ENCODE measurements at regions of chr12 and their contacts with region 1.

Region 1: DNA sequence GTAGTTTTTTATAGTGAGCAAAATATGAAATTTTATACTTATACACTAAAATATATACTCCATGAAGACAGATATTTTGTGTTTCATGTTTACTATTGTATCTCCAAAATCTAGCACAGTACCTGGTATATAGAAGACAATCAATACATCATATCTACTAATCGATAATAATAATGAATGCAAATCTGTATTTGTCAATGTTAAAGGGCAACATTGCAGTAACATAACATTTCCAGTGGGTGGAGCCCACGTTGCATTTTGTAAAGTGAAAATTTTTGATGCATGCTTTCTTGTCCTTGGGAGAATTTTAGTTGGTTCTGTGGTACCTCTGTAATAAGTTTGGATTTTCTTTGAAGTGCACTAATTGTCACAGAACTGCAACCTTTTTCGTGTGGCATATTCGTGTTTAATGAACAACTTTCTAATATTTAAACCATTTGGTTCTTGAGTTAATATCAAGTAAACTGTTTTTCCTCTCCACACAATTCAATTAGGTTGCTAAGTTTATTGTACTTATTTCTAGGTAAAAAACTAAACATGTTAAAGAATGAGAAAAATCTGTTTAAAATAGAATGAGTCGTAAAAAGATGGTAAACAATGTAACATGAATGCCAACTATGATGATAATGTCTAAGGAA is 47.4 kb downstream of the AVPR1A start:
- DNase-seq: no peak
- ATAC-seq: no peak

Region 2: DNA sequence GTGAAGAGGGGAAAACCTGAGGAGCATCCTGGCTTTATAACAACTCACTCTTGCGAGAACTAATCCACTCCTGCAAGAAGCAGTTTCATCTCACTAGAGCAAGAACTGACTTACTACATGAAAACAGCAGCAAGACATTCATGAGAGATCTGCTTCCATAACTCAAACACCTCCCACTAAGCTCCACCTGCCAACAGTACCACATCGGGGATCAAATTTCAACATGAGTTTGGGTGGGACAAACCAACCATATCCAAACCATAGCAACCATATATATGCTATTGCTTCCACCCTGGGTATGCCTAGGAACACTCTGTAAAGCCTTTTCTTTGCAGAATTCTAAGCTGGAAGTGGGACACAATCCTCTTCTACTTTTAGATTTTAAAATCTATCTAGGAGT is 61.3 kb after region 1 on chr12:
- intact Hi-C with region 1: no loop called
- DNase-seq: no peak
- ATAC-seq: no peak

Region 3: GRCh38 chr12:63298386-63298930 is 194.8 kb after region 1 on chr12:
- intact Hi-C with region 1: loop called (anchors 5 kb)
- DNase-seq: no peak
- ATAC-seq: no peak

Region 4: DNA sequence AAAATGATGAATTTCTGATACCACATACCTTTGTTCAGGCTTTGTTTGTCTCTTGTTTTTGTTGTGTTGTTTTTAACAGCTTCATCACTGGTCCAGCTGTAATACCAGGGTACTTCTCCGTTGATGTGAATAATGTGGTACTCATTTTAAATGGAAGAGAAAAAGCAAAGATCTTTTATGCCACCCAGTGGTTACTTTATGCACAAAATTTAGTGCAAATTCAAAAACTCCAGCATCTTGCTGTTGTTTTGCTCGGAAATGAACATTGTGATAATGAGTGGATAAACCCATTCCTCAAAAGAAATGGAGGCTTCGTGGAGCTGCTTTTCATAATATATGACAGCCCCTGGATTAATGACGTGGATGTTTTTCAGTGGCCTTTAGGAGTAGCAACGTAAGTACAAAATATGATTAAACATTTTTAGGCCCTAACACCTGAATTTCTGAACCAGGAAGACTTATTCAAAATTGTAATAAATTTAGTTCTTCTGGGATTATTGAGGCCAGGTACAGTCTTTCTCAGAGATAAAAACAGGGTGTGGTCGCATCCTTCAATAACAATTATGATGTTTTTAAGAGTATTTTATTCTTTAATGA is 698.5 kb after region 1 on chr12:
- intact Hi-C with region 1: loop called (anchors 10 kb)
- DNase-seq: no peak
- ATAC-seq: no peak

Measured in left ventricle myocardium superior (tissue), 1 donor.